CD4-positive, alpha-beta T cell (primary cell): ENCODE measurements at regions of chr19 and their contacts with region 1.

Region 1: GRCh38 chr19:41310033-41310758 is at the start of gene CCDC97:
- DNase-seq: peak; percentile 80 to 94 (median 88)
- ATAC-seq: peak; percentile 55
- H3K4me3 ChIP-seq: peak within 1 kb of the TSS; percentile 64
- H3K4me3 Mint-ChIP-seq: peak within 1 kb of the TSS; percentile 95
- H3K27ac ChIP-seq: peak within 1 kb of the TSS; percentile 95 to 97
- H3K27ac Mint-ChIP-seq: peak within 1 kb of the TSS; percentile 97
- H3K4me1 ChIP-seq: peaks cover 80% of the 10 kb centered on the region
- H3K4me1 Mint-ChIP-seq: peaks cover 80% of the 10 kb centered on the region
- H3K27me3 ChIP-seq: no peaks in the 10 kb centered on the region
- H3K27me3 Mint-ChIP-seq: no peaks in the 10 kb centered on the region
- CTCF ChIP-seq: no peak
- total RNA-seq, gene CCDC97: 27.3 to 29.7 TPM

Region 2: DNA sequence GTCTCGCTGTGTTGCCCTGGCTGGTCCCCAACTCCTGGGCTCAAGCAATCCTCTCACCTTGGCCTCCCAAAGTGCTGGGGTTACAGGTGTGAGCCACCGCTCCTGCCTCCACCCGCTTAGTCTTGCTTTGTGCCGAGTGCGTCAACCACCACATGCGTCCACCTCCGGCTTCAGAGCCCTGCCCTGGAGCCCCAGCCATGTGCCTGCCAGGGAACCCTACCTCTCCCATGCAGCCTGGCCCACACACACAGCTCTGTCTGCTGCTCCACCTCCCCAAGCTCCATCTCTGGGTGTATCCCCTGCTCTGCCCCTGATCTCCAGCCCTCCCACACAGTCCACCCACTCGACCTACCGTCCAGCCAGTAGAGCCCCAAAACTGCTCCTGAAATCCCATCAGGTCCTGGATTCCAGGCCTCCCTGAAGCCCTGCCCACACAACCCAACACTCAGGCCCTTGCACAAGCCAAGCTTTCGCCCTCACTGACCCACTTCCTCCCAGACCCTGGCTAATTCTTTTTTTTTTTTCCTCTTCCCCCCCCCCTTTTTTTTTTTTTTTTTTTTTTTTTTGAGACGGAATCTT is 186.4 kb before region 1 on chr19:
- CTCF ChIA-PET with region 1: no interaction called
- POLR2A ChIA-PET with region 1: no interaction called
- intact Hi-C with region 1: loop called (anchors 1 to 2 kb)
- DNase-seq: no peak
- ATAC-seq: no peak
- H3K4me3 ChIP-seq: no peak overlapping the region
- H3K4me3 Mint-ChIP-seq: no peak overlapping the region
- H3K27ac ChIP-seq: no peak overlapping the region
- H3K27ac Mint-ChIP-seq: peak overlapping the region; percentile 53
- H3K4me1 ChIP-seq: peaks cover 40% of the 10 kb centered on the region
- H3K4me1 Mint-ChIP-seq: peaks cover 36% of the 10 kb centered on the region
- H3K27me3 ChIP-seq: no peaks in the 10 kb centered on the region
- H3K27me3 Mint-ChIP-seq: no peaks in the 10 kb centered on the region
- CTCF ChIP-seq: no peak

Region 3: DNA sequence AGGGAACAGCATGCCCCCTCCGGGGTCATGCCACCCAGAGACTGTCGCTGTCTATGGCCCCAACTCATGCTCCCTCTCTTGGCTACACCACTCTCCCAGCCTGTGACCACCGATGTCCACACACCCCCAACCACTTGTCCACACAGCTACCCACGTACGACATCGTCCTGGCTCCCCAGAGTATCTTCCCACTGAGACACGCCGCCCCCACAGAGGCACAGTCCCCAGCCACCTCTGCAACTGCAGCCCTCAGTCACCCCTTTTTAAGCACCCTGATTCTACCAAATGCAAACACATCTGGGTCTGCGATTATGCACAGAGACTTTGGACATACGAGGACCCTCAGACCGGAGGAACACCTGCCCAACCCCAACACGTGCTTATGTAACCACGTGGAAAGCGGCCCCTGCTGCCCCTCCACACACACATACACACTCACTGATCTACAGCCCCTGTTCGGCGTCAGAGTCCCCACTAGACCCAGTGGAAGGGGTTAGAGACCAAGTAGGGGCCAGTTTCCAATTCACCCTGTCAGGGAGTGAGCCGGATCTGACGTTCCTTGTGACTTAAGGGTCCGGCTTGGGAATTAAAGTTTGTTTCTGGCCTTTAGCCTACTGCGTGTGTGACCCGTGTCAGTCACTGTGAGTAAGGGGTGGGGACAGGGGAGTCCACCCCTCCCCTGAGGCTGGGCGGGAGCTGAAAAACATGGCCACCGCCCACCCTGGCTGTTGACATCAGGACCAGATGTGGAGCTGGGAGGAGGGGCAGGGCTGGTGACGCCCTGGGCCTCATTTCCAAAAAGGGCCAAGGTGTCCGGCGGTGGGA is 103.1 kb before region 1 on chr19:
- CTCF ChIA-PET with region 1: interaction called, 41 read pairs
- POLR2A ChIA-PET with region 1: interaction called, 23 read pairs
- intact Hi-C with region 1: loop called (anchors 1 kb)
- DNase-seq: no peak
- ATAC-seq: no peak
- H3K4me3 ChIP-seq: no peak overlapping the region
- H3K4me3 Mint-ChIP-seq: no peak overlapping the region
- H3K27ac ChIP-seq: no peak overlapping the region
- H3K27ac Mint-ChIP-seq: peak overlapping the region; percentile 39
- H3K4me1 ChIP-seq: peaks cover 9% of the 10 kb centered on the region
- H3K4me1 Mint-ChIP-seq: no peaks in the 10 kb centered on the region
- H3K27me3 ChIP-seq: no peaks in the 10 kb centered on the region
- H3K27me3 Mint-ChIP-seq: no peaks in the 10 kb centered on the region
- CTCF ChIP-seq: no peak

Region 4: DNA sequence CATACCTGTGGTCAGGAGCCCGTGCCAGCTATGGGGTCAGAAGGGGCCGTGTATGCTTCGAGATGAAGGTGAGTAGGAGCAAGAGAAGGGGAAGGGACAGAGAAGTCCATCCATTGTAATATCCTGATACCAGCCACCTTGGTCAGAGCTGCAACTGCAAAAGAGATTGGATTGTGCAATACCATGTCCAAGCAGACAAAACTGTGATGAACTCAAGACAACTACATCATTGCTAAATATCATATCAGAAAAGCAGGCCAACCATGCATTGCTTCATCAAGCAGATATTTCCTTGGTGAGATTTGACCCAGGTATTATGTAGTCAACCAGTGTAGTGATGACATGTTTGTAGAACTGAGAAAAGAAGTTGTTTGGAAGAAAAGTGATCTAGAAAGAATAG is 34.0 kb before region 1 on chr19:
- CTCF ChIA-PET with region 1: no interaction called
- POLR2A ChIA-PET with region 1: no interaction called
- intact Hi-C with region 1: no loop called
- DNase-seq: no peak
- ATAC-seq: no peak
- H3K4me3 ChIP-seq: no peak overlapping the region
- H3K4me3 Mint-ChIP-seq: no peak overlapping the region
- H3K27ac ChIP-seq: no peak overlapping the region
- H3K27ac Mint-ChIP-seq: no peak overlapping the region
- H3K4me1 ChIP-seq: no peaks in the 10 kb centered on the region
- H3K4me1 Mint-ChIP-seq: peaks cover 14% of the 10 kb centered on the region
- H3K27me3 ChIP-seq: no peaks in the 10 kb centered on the region
- H3K27me3 Mint-ChIP-seq: no peaks in the 10 kb centered on the region
- CTCF ChIP-seq: no peak

Region 5: GRCh38 chr19:41298348-41298964 is 11.7 kb before region 1 on chr19:
- CTCF ChIA-PET with region 1: interaction called, 21 read pairs
- POLR2A ChIA-PET with region 1: interaction called, 9 read pairs
- intact Hi-C with region 1: loop called in 1 of 2 experiments (anchors 1 kb)
- DNase-seq: peak in 9 of 14 experiments; percentile 33 to 83 (median 44)
- ATAC-seq: peak; percentile 28
- H3K4me3 ChIP-seq: no peak overlapping the region
- H3K4me3 Mint-ChIP-seq: peak overlapping the region; percentile 51
- H3K27ac ChIP-seq: peak overlapping the region; percentile 38 to 86
- H3K27ac Mint-ChIP-seq: peak overlapping the region; percentile 97
- H3K4me1 ChIP-seq: peaks cover 88% of the 10 kb centered on the region
- H3K4me1 Mint-ChIP-seq: peaks cover 92% of the 10 kb centered on the region
- H3K27me3 ChIP-seq: no peaks in the 10 kb centered on the region
- H3K27me3 Mint-ChIP-seq: no peaks in the 10 kb centered on the region
- CTCF ChIP-seq: no peak

Region 6: DNA sequence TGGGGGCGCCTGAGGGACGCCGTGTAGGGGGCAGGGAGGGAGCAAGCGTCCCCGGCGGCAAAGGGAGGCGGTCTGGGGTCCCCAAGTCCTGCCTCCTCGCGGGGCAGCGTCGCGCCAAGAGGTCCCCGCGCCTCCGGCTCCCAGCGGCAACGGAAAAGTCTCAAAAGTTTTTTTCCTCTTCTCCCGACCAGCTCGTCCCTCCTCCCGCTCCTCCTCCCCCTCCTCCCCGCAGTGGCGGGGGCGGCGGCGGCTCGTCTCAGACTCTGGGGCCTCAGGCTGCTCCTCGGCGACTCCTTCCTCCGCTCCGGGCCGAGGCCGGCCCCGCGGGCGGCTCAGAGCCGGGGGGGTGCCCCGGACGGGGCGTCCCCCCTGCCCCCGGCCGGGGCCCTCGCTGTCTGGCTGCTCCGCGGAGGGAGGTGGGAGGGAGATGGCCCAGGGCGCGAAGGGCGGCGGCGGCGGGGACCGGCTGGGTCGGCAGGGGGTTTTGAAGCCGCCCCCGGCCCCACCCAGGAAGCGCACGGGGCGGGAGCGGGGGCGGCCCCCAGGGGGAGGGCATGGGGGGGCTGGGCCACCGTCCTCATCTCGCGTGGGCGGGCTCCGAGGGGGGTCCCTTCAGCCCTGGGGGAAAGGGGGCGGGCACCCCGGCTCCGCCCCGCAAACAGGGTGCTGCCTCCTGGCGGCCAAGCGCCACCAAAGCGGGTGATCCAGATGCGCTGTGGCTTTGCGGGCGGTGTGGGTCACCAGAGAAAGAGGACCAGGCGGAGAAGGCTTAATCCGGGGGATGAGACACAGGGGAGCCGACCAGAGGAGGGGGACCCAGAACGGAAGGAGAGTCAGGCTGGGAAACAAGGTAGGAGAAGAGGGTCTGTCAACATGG is 43.5 kb after region 1 on chr19 and contains the start of gene TGFB1:
- CTCF ChIA-PET with region 1: interaction called, 20 read pairs
- POLR2A ChIA-PET with region 1: interaction called, 45 read pairs
- intact Hi-C with region 1: loop called (anchors 1 to 5 kb)
- DNase-seq: peak; percentile 89 to 98 (median 94)
- ATAC-seq: peak; percentile 60
- H3K4me3 ChIP-seq: peak within 1 kb of the TSS; percentile 99
- H3K4me3 Mint-ChIP-seq: peak within 1 kb of the TSS; percentile 94
- H3K27ac ChIP-seq: peak within 1 kb of the TSS; percentile 82 to 94
- H3K27ac Mint-ChIP-seq: peak within 1 kb of the TSS; percentile 93
- H3K4me1 ChIP-seq: peaks cover 72% of the 10 kb centered on the region
- H3K4me1 Mint-ChIP-seq: peaks cover 81% of the 10 kb centered on the region
- H3K27me3 ChIP-seq: no peaks in the 10 kb centered on the region
- H3K27me3 Mint-ChIP-seq: no peaks in the 10 kb centered on the region
- CTCF ChIP-seq: peak; percentile 80
- total RNA-seq, gene TGFB1: 406 to 416 TPM

Region 7: GRCh38 chr19:41439441-41440222 is 129.4 kb after region 1 on chr19 and contains the start of gene DMAC2:
- CTCF ChIA-PET with region 1: no interaction called
- POLR2A ChIA-PET with region 1: no interaction called
- intact Hi-C with region 1: loop called in 1 of 2 experiments (anchors 5 kb)
- DNase-seq: peak; percentile 86 to 97 (median 93)
- ATAC-seq: peak; percentile 99
- H3K4me3 ChIP-seq: peak within 1 kb of the TSS; percentile 90
- H3K4me3 Mint-ChIP-seq: no peak within 1 kb of the TSS
- H3K27ac ChIP-seq: peak within 1 kb of the TSS; percentile 60 to 77
- H3K27ac Mint-ChIP-seq: no peak within 1 kb of the TSS
- H3K4me1 ChIP-seq: peaks cover 16% of the 10 kb centered on the region
- H3K4me1 Mint-ChIP-seq: no peaks in the 10 kb centered on the region
- H3K27me3 ChIP-seq: no peaks in the 10 kb centered on the region
- H3K27me3 Mint-ChIP-seq: peaks cover 13% of the 10 kb centered on the region
- CTCF ChIP-seq: peak; percentile 65
- total RNA-seq, gene DMAC2: 21.6 to 25.7 TPM

Region 8: DNA sequence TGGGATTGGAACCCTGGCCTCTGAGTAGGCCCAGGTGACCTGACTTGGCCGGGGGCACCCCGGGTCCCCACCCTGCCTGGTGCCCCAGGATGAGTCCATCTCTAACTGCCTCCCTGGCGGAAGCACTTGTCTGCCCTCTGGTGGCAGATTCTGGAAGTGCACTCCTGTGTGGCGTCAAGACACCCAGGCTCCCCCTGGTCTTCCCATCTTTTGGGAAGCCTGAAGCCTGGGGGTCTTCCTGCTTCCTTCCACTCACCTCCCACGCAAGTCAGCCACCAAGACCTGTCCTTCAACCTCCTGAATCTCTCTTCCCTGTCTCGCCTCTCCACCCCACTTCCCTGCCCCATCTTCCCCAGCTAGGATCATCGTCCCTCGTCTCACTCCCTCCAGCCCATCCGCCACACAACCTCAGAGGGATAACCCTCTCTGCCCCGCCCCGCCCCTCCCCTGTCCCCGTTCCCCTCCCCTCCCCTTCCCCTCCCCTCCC is 641.5 kb after region 1 on chr19:
- CTCF ChIA-PET with region 1: no interaction called
- POLR2A ChIA-PET with region 1: no interaction called
- intact Hi-C with region 1: no loop called
- DNase-seq: peak; percentile 76 to 95 (median 88)
- ATAC-seq: peak; percentile 95
- H3K4me3 ChIP-seq: no peak overlapping the region
- H3K4me3 Mint-ChIP-seq: peak overlapping the region; percentile 61
- H3K27ac ChIP-seq: no peak overlapping the region
- H3K27ac Mint-ChIP-seq: peak overlapping the region; percentile 48
- H3K4me1 ChIP-seq: peaks cover 15% of the 10 kb centered on the region
- H3K4me1 Mint-ChIP-seq: peaks cover 20% of the 10 kb centered on the region
- H3K27me3 ChIP-seq: no peaks in the 10 kb centered on the region
- H3K27me3 Mint-ChIP-seq: no peaks in the 10 kb centered on the region
- CTCF ChIP-seq: peak; percentile 99